Head of caudate nucleus (tissue), 42 donors: ENCODE measurements at regions of chr10 and their contacts with region 1.

Region 1: DNA sequence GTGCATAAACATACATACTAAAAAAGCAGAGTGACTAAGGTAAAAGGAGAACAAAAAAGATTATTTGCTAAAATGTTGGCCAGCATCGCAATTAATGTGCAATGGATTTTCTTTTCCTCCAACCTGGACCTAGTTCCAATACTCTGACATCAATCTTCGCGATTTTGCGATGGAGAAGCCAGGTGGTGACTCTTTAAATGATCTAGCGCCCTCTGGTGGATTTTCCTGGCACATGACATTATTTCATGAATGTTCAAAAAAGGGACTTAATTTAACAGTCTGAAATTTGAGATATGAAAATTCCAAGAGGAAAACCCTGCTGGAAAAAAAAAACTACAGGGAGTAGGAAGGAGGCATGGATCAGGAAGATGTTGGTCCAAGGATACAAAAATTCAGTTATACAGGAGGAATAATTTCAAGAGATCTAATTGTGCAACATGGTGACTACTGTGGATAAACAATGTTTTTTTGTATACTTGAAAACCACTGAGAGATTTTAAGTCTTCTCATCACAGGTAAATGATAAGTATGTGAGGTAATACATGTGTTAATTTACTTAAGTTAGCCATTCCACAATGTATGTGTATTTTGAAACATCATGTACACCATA is 4.3 kb upstream of the KCNMA1 start:
- DNase-seq: peak in 37 of 42 donors; percentile 18 to 92 (median 73)

Region 2: GRCh38 chr10:77179015-77179695 is 462.7 kb before region 1 on chr10:
- intact Hi-C with region 1: loop called (anchors 5 kb)
- DNase-seq: peak in 3 of 42 donors; percentile 26 to 57 (median 46)

Region 3: DNA sequence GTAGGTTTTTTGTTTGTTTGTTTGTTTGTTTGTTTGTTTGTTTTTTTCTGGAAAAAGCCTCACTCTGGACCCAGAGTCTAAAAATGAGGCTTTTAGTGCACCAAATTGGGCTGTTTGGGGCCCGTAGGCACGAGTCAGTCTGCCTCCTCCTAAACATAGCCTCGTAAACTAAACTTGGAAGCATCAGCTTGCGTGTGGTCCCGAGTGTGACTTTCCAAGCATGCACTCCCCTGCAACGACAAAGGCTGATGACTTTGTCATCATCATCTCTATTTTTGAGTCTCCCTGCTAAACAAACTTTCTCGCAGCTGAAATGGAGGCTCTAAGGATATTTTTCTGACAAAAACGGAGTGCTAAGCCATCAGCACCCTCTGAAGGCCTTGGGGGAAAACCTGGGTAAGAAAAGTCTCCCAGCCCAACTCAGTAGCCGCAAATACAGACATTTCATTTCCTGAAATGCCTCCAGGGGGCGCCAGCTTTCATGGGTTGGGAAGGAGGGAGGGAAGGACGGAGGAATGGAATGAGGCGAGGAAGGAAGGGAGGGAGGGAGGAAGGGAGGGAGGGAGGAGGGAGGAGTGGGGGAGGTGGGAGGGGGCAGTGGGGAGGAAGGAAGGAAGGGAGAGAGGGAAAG is 250.2 kb before region 1 on chr10:
- intact Hi-C with region 1: loop called (anchors 5 kb)
- DNase-seq: peak; percentile 33 to 92 (median 79)